T-cell (primary cell): ENCODE measurements at regions of chr6 and their contacts with region 1.

Region 1: GRCh38 chr6:168118935-168119334 is 39.9 kb upstream of the FRMD1 start:
- DNase-seq: peak in 3 of 35 experiments; percentile 2 to 5 (median 5)
- ATAC-seq: no peak
- H3K4me3 ChIP-seq: no peak overlapping the region
- H3K4me3 Mint-ChIP-seq: no peak overlapping the region
- H3K27ac ChIP-seq: no peak overlapping the region
- H3K27ac Mint-ChIP-seq: no peak overlapping the region
- H3K4me1 ChIP-seq: no peaks in the 10 kb centered on the region
- H3K4me1 Mint-ChIP-seq: no peaks in the 10 kb centered on the region
- H3K27me3 ChIP-seq: peaks cover 0 to 6% of the 10 kb centered on the region in 2 experiments
- H3K27me3 Mint-ChIP-seq: no peaks in the 10 kb centered on the region

Region 2: DNA sequence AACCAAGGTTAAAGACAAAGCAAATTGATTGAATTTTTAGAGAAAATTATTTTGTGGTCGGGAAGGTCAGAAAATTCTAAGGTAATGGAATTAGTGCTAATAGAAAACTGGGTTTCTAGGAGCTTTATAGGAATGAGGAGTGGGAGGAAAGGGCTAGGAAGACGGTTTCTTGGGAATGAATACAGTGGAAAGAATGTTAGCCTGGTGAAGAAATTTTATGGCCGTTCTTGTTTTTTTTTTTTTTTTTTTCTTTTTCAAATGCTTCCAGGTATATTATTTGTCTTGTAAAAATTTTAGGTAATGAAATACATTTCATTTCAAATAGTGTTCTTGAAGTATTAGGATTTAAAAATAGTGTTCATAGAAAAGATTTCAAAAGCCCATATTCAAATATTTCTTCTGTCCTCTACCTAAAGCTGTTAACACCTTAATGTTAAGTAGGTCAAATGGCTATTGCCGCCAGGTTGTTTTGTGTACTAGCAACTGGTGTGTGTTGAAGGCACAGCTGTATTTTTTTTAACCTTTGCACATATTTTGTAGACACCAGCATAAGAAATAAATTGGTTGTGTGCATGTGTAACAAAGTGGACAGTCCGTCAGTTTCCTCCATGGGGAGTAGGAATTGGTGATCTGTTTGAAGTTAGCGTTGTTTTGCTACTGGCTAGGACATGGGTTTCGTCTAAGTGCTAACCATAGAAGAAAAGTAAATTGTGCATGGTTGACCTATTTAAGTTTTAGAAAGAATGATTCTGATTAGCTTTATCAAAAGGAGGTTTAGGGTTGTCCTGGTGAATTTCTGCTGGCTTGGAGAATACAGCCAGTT is 259.9 kb before region 1 on chr6:
- CTCF ChIA-PET with region 1: interaction called in 1 of 2 experiments, 11 read pairs
- POLR2A ChIA-PET with region 1: no interaction called
- DNase-seq: no peak
- ATAC-seq: no peak
- H3K4me3 ChIP-seq: no peak overlapping the region
- H3K4me3 Mint-ChIP-seq: no peak overlapping the region
- H3K27ac ChIP-seq: no peak overlapping the region
- H3K27ac Mint-ChIP-seq: no peak overlapping the region
- H3K4me1 ChIP-seq: no peaks in the 10 kb centered on the region
- H3K4me1 Mint-ChIP-seq: peaks cover 0 to 17% (median 0%) of the 10 kb centered on the region in 3 donors
- H3K27me3 ChIP-seq: peaks cover 0 to 6% of the 10 kb centered on the region in 2 experiments
- H3K27me3 Mint-ChIP-seq: peaks cover 4 to 23% of the 10 kb centered on the region in 2 donors